K562 (cell line): ENCODE measurements at regions of chr10 and their contacts with region 1.

Region 1: GRCh38 chr10:44932517-44933450 is 21.6 kb downstream of the TMEM72 start:
- DNase-seq: peak; percentile 67 to 85 (median 82)
- ATAC-seq: peak; percentile 99
- H3K4me3 ChIP-seq: no peak overlapping the region
- H3K27ac ChIP-seq: no peak overlapping the region
- H3K4me1 ChIP-seq: no peaks in the 10 kb centered on the region
- H3K27me3 ChIP-seq: peaks cover 9 to 50% of the 10 kb centered on the region in 2 experiments; a peak in 4 of 5 replicates
- CTCF ChIP-seq: peak; percentile 96 to 97 (median 97)
- EP300 ChIP-seq: no peak
- POLR2A ChIP-seq: no peak
- RAD21 ChIP-seq: peak; percentile 97 to 98

Region 2: DNA sequence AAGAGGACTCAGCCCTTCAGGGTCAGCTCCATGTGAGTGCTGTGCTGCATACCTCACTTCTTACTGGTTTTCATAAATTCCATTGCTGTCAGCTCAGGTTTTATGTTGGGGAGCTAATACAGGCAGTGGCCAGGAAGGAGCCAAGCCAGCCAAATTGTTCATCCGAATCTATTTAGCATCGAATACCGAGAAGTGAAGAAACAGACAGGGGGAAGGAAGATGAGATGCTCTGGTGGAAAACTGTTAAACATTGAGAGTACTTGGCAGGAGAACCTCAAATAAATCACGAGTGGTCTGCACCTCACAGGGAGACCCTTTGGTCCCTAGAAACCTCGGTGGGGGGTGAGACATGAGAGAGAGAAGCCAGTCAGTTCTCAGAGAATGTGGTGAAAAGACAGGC is 217.6 kb before region 1 on chr10:
- CTCF ChIA-PET with region 1: no interaction called
- POLR2A ChIA-PET with region 1: no interaction called
- in situ Hi-C with region 1: no loop called
- intact Hi-C with region 1: no loop called
- DNase-seq: no peak
- ATAC-seq: no peak
- H3K4me3 ChIP-seq: no peak overlapping the region
- H3K27ac ChIP-seq: no peak overlapping the region
- H3K4me1 ChIP-seq: no peaks in the 10 kb centered on the region
- H3K27me3 ChIP-seq: peaks cover 0 to 5% of the 10 kb centered on the region in 2 experiments; a peak in 3 of 5 replicates
- CTCF ChIP-seq: no peak
- EP300 ChIP-seq: no peak
- POLR2A ChIP-seq: no peak
- RAD21 ChIP-seq: no peak

Region 3: DNA sequence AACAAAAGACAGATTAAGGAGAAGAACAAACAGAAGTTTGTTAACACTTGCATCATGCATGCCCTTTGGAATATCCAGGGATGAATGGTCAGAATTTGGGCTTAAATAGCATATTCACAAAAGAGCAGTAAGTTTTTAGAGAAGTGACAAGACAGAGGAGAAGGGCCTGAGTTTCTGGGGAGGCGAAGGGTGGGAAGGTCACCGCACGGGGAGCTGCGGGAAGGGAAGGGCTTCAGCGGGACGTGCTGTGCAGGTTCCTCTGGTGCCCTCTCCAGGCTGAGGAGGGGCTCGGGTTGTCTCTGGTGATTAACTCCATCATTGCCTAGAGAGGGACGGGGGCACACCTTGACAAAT is 57.5 kb after region 1 on chr10:
- CTCF ChIA-PET with region 1: interaction called, 25 read pairs
- POLR2A ChIA-PET with region 1: interaction called, 3 read pairs
- in situ Hi-C with region 1: no loop called
- intact Hi-C with region 1: loop called (anchors 1 kb)
- DNase-seq: peak; percentile 30 to 61 (median 44)
- ATAC-seq: peak; percentile 89
- H3K4me3 ChIP-seq: no peak overlapping the region
- H3K27ac ChIP-seq: no peak overlapping the region
- H3K4me1 ChIP-seq: peaks cover 0 to 15% of the 10 kb centered on the region in 2 experiments; a peak in 4 of 5 replicates
- H3K27me3 ChIP-seq: peaks cover 32 to 69% of the 10 kb centered on the region in 2 experiments
- CTCF ChIP-seq: peak; percentile 78 to 96 (median 89)
- EP300 ChIP-seq: no peak
- POLR2A ChIP-seq: no peak
- RAD21 ChIP-seq: peak; percentile 82 to 91